Heart right ventricle (tissue), 16 donors: ENCODE measurements at regions of chr9 and their contacts with region 1.

Region 1: GRCh38 chr9:70602321-70603019 is 188.0 kb upstream of the KLF9 start:
- DNase-seq: peak in 1 of 2 donors; percentile 72
- ATAC-seq: peak; percentile 19 to 80 (median 72)
- H3K4me3 ChIP-seq: peak overlapping the region in 7 of 10 donors; percentile 3 to 36 (median 32)
- H3K27ac ChIP-seq: peak overlapping the region; percentile 80 to 94 (median 88)
- H3K4me1 ChIP-seq: peaks cover 6 to 35% (median 29%) of the 10 kb centered on the region in 9 donors
- H3K27me3 ChIP-seq: no peaks in the 10 kb centered on the region
- CTCF ChIP-seq: peak; percentile 72 to 87 (median 78)

Region 2: GRCh38 chr9:69971643-69972449 is 630.6 kb before region 1 on chr9:
- intact Hi-C with region 1: loop called in 2 of 10 experiments (anchors 5 to 10 kb)
- DNase-seq: peak; percentile 63 to 75
- ATAC-seq: peak; percentile 68 to 83 (median 74)
- H3K4me3 ChIP-seq: no peak overlapping the region
- H3K27ac ChIP-seq: no peak overlapping the region
- H3K4me1 ChIP-seq: peaks cover 0 to 13% (median 0%) of the 10 kb centered on the region in 9 donors
- H3K27me3 ChIP-seq: no peaks in the 10 kb centered on the region
- CTCF ChIP-seq: peak; percentile 73 to 91 (median 83)

Region 3: GRCh38 chr9:70258692-70259511 is 343.6 kb before region 1 on chr9 and contains the start of gene SMC5:
- intact Hi-C with region 1: loop called in 4 of 10 experiments (anchors 5 kb)
- DNase-seq: peak; percentile 87 to 92
- ATAC-seq: peak; percentile 96 to 99 (median 98)
- H3K4me3 ChIP-seq: peak within 1 kb of the TSS; percentile 68 to 87 (median 82)
- H3K27ac ChIP-seq: peak within 1 kb of the TSS; percentile 77 to 98 (median 92)
- H3K4me1 ChIP-seq: peaks cover 0 to 62% (median 55%) of the 10 kb centered on the region in 9 donors
- H3K27me3 ChIP-seq: no peaks in the 10 kb centered on the region
- CTCF ChIP-seq: no peak
- total RNA-seq, gene SMC5: 9.3 to 16.4 (median 13.7) TPM

Region 4: DNA sequence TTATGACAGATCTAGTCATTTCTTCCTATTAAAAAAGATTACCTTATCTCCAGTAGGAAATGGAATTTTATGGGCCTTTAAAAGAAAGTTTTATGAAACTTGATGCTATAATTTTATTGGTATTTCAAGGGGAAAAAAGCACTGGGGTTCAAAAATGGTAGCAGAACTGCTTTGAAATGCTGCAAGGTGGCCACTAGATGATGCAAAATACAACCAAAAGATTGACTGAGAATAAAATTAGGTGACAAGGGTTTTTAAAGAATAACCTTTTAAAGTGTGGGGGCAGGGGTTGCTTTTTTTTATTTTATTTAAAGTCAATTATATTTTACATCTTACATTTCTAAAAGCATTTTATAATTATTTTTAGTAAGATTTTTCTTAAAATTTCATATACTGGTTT is 249.7 kb before region 1 on chr9:
- intact Hi-C with region 1: loop called in 7 of 10 experiments (anchors 2 to 5 kb)
- DNase-seq: no peak
- ATAC-seq: peak in 2 of 8 donors; percentile 36 to 57
- H3K4me3 ChIP-seq: no peak overlapping the region
- H3K27ac ChIP-seq: peak overlapping the region in 2 of 10 donors; percentile 3 to 16
- H3K4me1 ChIP-seq: peaks cover 0 to 33% (median 10%) of the 10 kb centered on the region in 9 donors
- H3K27me3 ChIP-seq: no peaks in the 10 kb centered on the region
- CTCF ChIP-seq: peak; percentile 48 to 89 (median 73)

Region 5: GRCh38 chr9:70419546-70420266 is 182.8 kb before region 1 on chr9:
- intact Hi-C with region 1: loop called (anchors 1 to 10 kb)
- DNase-seq: peak; percentile 96 to 97
- ATAC-seq: peak; percentile 68 to 86 (median 74)
- H3K4me3 ChIP-seq: peak overlapping the region in 9 of 10 donors; percentile 45 to 71 (median 64)
- H3K27ac ChIP-seq: peak overlapping the region; percentile 95 to 100 (median 100)
- H3K4me1 ChIP-seq: peaks cover 22 to 74% (median 60%) of the 10 kb centered on the region in 9 donors
- H3K27me3 ChIP-seq: no peaks in the 10 kb centered on the region
- CTCF ChIP-seq: peak in 2 of 9 donors; percentile 34 to 36

Region 6: DNA sequence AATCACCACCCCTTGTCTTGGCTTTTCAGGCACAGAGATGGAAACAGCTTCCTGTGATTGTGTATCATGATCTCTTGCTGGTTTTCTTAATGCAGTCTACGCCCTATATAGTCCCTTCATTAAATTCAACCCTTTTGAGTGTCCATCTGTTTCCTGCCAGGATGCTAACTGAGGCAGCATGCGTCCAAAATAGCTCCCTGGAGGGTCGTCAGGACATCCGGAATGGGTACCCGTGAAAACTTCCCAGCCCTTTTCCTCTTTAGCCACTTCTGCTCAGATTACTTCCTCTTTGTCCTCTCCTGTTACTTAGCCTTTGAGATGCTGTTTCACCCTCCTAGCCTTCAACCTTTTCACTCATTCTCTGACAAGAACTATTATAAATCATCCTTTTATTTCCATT is 108.2 kb before region 1 on chr9:
- intact Hi-C with region 1: loop called in 3 of 10 experiments (anchors 2 to 10 kb)
- DNase-seq: peak in 1 of 2 donors; percentile 40
- ATAC-seq: peak in 7 of 8 donors; percentile 36 to 71 (median 46)
- H3K4me3 ChIP-seq: no peak overlapping the region
- H3K27ac ChIP-seq: peak overlapping the region in 9 of 10 donors; percentile 9 to 75 (median 55)
- H3K4me1 ChIP-seq: peaks cover 15 to 55% (median 41%) of the 10 kb centered on the region in 9 donors
- H3K27me3 ChIP-seq: no peaks in the 10 kb centered on the region
- CTCF ChIP-seq: no peak

Region 7: DNA sequence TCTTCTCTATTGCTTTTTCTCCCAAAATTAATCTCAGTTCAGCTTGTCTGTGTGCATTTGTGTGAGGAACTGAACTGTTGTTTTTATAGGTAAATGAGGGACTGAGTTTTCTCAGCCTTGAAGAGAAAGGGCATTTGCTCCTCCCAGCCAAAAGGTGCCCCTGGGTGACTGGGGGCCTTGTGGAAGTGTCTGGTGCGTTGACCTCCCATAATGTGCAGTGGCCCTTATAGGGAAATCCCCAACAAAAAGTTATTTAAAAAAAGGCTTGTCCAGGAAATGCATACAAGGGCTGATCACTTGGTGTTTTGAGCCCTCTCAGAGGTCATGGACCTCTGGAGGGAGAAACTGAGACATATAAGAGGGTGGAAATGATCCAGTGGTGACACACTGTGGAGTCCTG is 51.7 kb after region 1 on chr9:
- intact Hi-C with region 1: no loop called
- DNase-seq: no peak
- ATAC-seq: no peak
- H3K4me3 ChIP-seq: no peak overlapping the region
- H3K27ac ChIP-seq: no peak overlapping the region
- H3K4me1 ChIP-seq: no peaks in the 10 kb centered on the region
- H3K27me3 ChIP-seq: no peaks in the 10 kb centered on the region
- CTCF ChIP-seq: no peak